CD8-positive, alpha-beta T cell (primary cell): ENCODE measurements at regions of chr3 and their contacts with region 1.

Region 1: GRCh38 chr3:126982471-126983175 is at the start of gene PLXNA1:
- DNase-seq: peak; percentile 81 to 95 (median 83)
- ATAC-seq: peak; percentile 81
- H3K4me3 ChIP-seq: peak within 1 kb of the TSS; percentile 57 to 69
- H3K4me3 Mint-ChIP-seq: peak within 1 kb of the TSS; percentile 85
- H3K27ac ChIP-seq: peak within 1 kb of the TSS; percentile 71 to 90
- H3K27ac Mint-ChIP-seq: peak within 1 kb of the TSS; percentile 94
- H3K4me1 ChIP-seq: peaks cover 19% of the 10 kb centered on the region
- H3K4me1 Mint-ChIP-seq: peaks cover 12% of the 10 kb centered on the region
- H3K27me3 ChIP-seq: peaks cover 0 to 2% of the 10 kb centered on the region in 2 experiments
- H3K27me3 Mint-ChIP-seq: peaks cover 14% of the 10 kb centered on the region
- CTCF ChIP-seq: peak; percentile 92
- total RNA-seq, gene PLXNA1: 7.3 to 8.4 TPM

Region 2: GRCh38 chr3:126083913-126084767 is 898.5 kb before region 1 on chr3 and contains the start of gene SLC41A3:
- CTCF ChIA-PET with region 1: no interaction called
- POLR2A ChIA-PET with region 1: no interaction called
- intact Hi-C with region 1: loop called (anchors 5 kb)
- DNase-seq: peak; percentile 51 to 91 (median 82)
- ATAC-seq: peak; percentile 86
- H3K4me3 ChIP-seq: peak within 1 kb of the TSS; percentile 58 to 71
- H3K4me3 Mint-ChIP-seq: peak within 1 kb of the TSS; percentile 84
- H3K27ac ChIP-seq: peak within 1 kb of the TSS; percentile 71 to 80
- H3K27ac Mint-ChIP-seq: peak within 1 kb of the TSS; percentile 81
- H3K4me1 ChIP-seq: peaks cover 11% of the 10 kb centered on the region
- H3K4me1 Mint-ChIP-seq: peaks cover 26% of the 10 kb centered on the region
- H3K27me3 ChIP-seq: no peaks in the 10 kb centered on the region
- H3K27me3 Mint-ChIP-seq: no peaks in the 10 kb centered on the region
- CTCF ChIP-seq: peak; percentile 54
- total RNA-seq, gene SLC41A3: 24.0 to 26.1 TPM

Region 3: DNA sequence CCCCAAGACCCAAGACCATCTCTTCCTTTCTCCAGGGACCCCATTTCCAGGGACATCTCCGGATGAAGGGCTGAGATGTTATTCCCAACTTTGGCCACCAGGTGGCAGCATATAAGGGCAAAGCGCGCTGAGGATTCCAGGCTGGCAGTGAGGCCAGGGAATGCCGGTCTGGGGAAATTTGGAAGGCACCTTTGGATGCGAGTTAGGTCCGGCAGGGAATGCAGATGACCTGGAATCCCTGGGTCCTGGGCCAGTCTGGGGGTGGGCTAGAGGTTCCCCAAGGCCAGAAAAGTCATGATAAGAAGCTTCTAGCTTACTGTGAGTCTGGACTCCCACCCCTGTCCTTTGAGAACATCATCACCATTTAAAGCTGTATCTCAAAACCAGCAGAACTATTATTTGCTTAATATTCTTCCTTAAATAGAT is 460.2 kb before region 1 on chr3:
- CTCF ChIA-PET with region 1: no interaction called
- POLR2A ChIA-PET with region 1: no interaction called
- intact Hi-C with region 1: loop called in 1 of 2 experiments (anchors 2 kb)
- DNase-seq: peak in 7 of 9 experiments; percentile 25 to 71 (median 50)
- ATAC-seq: no peak
- H3K4me3 ChIP-seq: no peak overlapping the region
- H3K4me3 Mint-ChIP-seq: no peak overlapping the region
- H3K27ac ChIP-seq: no peak overlapping the region
- H3K27ac Mint-ChIP-seq: no peak overlapping the region
- H3K4me1 ChIP-seq: no peaks in the 10 kb centered on the region
- H3K4me1 Mint-ChIP-seq: peaks cover 2% of the 10 kb centered on the region
- H3K27me3 ChIP-seq: no peaks in the 10 kb centered on the region
- H3K27me3 Mint-ChIP-seq: peaks cover 22% of the 10 kb centered on the region
- CTCF ChIP-seq: peak; percentile 83

Region 4: DNA sequence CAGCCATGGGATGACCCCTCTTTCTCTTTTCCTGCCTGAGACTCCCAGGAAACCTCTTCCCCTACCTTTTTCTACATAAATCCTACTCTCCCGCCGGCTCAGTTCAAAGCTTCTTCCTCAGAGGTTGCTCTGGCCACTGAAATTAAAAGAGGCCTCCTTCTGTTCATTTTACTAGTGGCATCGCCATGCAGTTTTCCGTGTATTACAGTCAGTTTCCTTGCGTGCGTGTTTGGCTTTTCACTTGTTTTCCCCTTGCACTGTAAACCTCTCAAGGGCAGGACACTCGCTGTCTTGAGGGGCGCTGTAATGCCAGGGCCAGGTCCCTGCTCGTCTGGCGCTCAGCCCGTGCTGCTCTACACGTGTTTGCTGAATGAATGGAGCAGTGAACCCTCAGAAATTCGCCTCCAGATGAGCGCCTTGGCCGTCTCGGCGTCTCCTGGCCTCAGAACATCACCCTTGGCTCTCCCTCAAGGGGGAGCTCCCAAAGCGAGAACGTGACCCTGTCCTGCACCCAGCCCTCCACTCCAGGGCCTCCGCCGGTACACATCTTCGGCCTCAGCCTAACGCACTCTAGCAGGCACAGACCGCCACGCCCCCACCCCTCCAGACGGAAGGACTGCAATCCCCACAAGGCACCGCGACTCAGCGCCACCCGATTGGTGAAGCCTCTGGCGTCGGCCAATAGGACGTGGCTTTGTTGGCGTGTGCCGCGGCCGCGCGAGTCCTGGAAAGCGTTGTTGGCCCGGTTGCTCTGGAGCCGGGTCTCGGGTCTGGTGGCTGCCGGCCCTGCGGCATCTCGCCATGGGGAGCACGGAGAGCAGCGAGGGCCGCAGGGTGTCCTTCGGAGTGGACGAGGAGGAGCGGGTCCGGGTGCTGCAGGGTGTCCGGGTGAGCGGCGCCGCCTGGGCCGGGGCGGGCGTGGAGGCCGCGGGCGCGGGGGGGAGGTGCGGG is 278.8 kb before region 1 on chr3 and contains the start of gene CHCHD6:
- CTCF ChIA-PET with region 1: no interaction called
- POLR2A ChIA-PET with region 1: no interaction called
- intact Hi-C with region 1: loop called (anchors 1 kb)
- DNase-seq: peak; percentile 92 to 99 (median 96)
- ATAC-seq: peak; percentile 93
- H3K4me3 ChIP-seq: peak within 1 kb of the TSS; percentile 74 to 75
- H3K4me3 Mint-ChIP-seq: peak within 1 kb of the TSS; percentile 98
- H3K27ac ChIP-seq: peak within 1 kb of the TSS in 1 of 2 experiments; percentile 36
- H3K27ac Mint-ChIP-seq: peak within 1 kb of the TSS; percentile 88
- H3K4me1 ChIP-seq: peaks cover 17% of the 10 kb centered on the region
- H3K4me1 Mint-ChIP-seq: peaks cover 22% of the 10 kb centered on the region
- H3K27me3 ChIP-seq: no peaks in the 10 kb centered on the region
- H3K27me3 Mint-ChIP-seq: peaks cover 15% of the 10 kb centered on the region
- CTCF ChIP-seq: no peak
- total RNA-seq, gene CHCHD6: 6.2 to 6.4 TPM

Region 5: GRCh38 chr3:127590593-127591477 is 608.2 kb after region 1 on chr3 and contains the start of gene TPRA1:
- CTCF ChIA-PET with region 1: no interaction called
- POLR2A ChIA-PET with region 1: no interaction called
- intact Hi-C with region 1: loop called (anchors 5 to 10 kb)
- DNase-seq: peak; percentile 46 to 94 (median 79)
- ATAC-seq: peak; percentile 86
- H3K4me3 ChIP-seq: peak within 1 kb of the TSS; percentile 75 to 81
- H3K4me3 Mint-ChIP-seq: peak within 1 kb of the TSS; percentile 97
- H3K27ac ChIP-seq: peak within 1 kb of the TSS; percentile 68 to 74
- H3K27ac Mint-ChIP-seq: peak within 1 kb of the TSS; percentile 91
- H3K4me1 ChIP-seq: peaks cover 20% of the 10 kb centered on the region
- H3K4me1 Mint-ChIP-seq: peaks cover 35% of the 10 kb centered on the region
- H3K27me3 ChIP-seq: no peaks in the 10 kb centered on the region
- H3K27me3 Mint-ChIP-seq: no peaks in the 10 kb centered on the region
- CTCF ChIP-seq: no peak
- total RNA-seq, gene TPRA1: 6.0 to 6.1 TPM

Region 6: GRCh38 chr3:128123538-128124368 is 1141.1 kb after region 1 on chr3 and contains the start of gene RUVBL1:
- CTCF ChIA-PET with region 1: no interaction called
- POLR2A ChIA-PET with region 1: no interaction called
- intact Hi-C with region 1: loop called in 1 of 2 experiments (anchors 10 kb)
- DNase-seq: peak; percentile 92 to 99 (median 96)
- ATAC-seq: peak; percentile 92
- H3K4me3 ChIP-seq: peak within 1 kb of the TSS; percentile 82 to 90
- H3K4me3 Mint-ChIP-seq: peak within 1 kb of the TSS; percentile 98
- H3K27ac ChIP-seq: peak within 1 kb of the TSS; percentile 86 to 96
- H3K27ac Mint-ChIP-seq: peak within 1 kb of the TSS; percentile 98
- H3K4me1 ChIP-seq: peaks cover 19% of the 10 kb centered on the region
- H3K4me1 Mint-ChIP-seq: peaks cover 27% of the 10 kb centered on the region
- H3K27me3 ChIP-seq: no peaks in the 10 kb centered on the region
- H3K27me3 Mint-ChIP-seq: no peaks in the 10 kb centered on the region
- CTCF ChIP-seq: no peak
- total RNA-seq, gene RUVBL1: 5.1 to 5.6 TPM